T-cell (primary cell): ENCODE measurements at regions of chr5 and their contacts with region 1.

Region 1: GRCh38 chr5:141960449-141961202 is 2.6 kb upstream of the PCDH12 start:
- DNase-seq: peak; percentile 79 to 96 (median 88)
- ATAC-seq: peak; percentile 95 to 97 (median 96)
- H3K4me3 ChIP-seq: no peak overlapping the region
- H3K4me3 Mint-ChIP-seq: peak overlapping the region; percentile 25 to 39 (median 26)
- H3K27ac ChIP-seq: peak overlapping the region; percentile 45
- H3K27ac Mint-ChIP-seq: peak overlapping the region; percentile 94
- H3K4me1 ChIP-seq: peaks cover 13 to 47% of the 10 kb centered on the region in 2 experiments
- H3K4me1 Mint-ChIP-seq: peaks cover 41 to 51% (median 50%) of the 10 kb centered on the region in 3 donors
- H3K27me3 ChIP-seq: no peaks in the 10 kb centered on the region
- H3K27me3 Mint-ChIP-seq: no peaks in the 10 kb centered on the region

Region 2: DNA sequence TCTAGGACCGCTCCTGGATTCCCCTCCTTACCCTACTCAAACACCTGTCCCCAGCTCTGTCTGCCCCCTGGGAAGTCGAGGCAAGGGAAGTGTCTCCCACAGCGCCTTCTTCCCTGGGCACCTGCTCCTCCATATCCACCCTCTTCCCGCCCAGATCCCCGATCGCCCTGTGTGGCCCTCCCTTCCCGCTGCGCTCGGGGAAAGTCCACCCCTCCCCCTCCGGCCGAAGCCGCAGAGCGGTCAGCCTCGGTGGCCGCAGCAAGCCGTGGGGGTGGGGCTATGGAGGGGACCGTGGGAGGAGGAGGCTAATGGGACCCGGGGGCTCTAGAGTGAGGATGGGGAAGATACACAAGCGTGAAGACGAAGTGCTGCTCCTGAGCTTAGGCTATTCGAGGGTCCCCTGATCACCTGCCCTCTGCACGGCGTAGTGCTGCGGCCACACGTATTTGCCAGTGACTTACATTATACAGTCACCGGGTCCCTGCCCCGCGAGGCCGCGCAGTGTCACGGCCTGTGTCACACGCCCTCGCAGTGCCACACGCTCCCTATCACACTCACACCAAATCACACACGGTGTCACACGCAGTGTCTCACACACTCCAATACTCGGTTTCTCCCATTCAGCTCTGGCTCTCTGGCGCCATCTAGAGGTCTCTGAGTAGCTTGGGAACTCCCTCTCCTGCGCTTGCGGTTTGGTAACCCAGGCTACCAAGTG is 81.8 kb before region 1 on chr5:
- CTCF ChIA-PET with region 1: interaction called, 3 to 18 read pairs
- POLR2A ChIA-PET with region 1: no interaction called
- DNase-seq: peak; percentile 75 to 98 (median 84)
- ATAC-seq: peak; percentile 81 to 88 (median 83)
- H3K4me3 ChIP-seq: peak overlapping the region; percentile 46 to 61
- H3K4me3 Mint-ChIP-seq: peak overlapping the region; percentile 64 to 81 (median 80)
- H3K27ac ChIP-seq: no peak overlapping the region
- H3K27ac Mint-ChIP-seq: no peak overlapping the region
- H3K4me1 ChIP-seq: peaks cover 10 to 53% of the 10 kb centered on the region in 2 experiments
- H3K4me1 Mint-ChIP-seq: peaks cover 30 to 34% (median 33%) of the 10 kb centered on the region in 3 donors
- H3K27me3 ChIP-seq: peaks cover 20 to 94% of the 10 kb centered on the region in 2 experiments
- H3K27me3 Mint-ChIP-seq: peaks cover 70 to 80% of the 10 kb centered on the region in 2 donors

Region 3: GRCh38 chr5:141889282-141889871 is 71.2 kb before region 1 on chr5:
- CTCF ChIA-PET with region 1: interaction called, 3 to 10 read pairs
- POLR2A ChIA-PET with region 1: no interaction called
- DNase-seq: peak in 1 of 35 experiments; percentile 16
- ATAC-seq: no peak
- H3K4me3 ChIP-seq: no peak overlapping the region
- H3K4me3 Mint-ChIP-seq: no peak overlapping the region
- H3K27ac ChIP-seq: no peak overlapping the region
- H3K27ac Mint-ChIP-seq: no peak overlapping the region
- H3K4me1 ChIP-seq: no peaks in the 10 kb centered on the region
- H3K4me1 Mint-ChIP-seq: no peaks in the 10 kb centered on the region
- H3K27me3 ChIP-seq: peaks cover 4 to 21% of the 10 kb centered on the region in 2 experiments
- H3K27me3 Mint-ChIP-seq: peaks cover 32 to 38% of the 10 kb centered on the region in 2 donors

Region 4: GRCh38 chr5:141931694-141932093 is 28.9 kb before region 1 on chr5:
- CTCF ChIA-PET with region 1: no interaction called
- POLR2A ChIA-PET with region 1: no interaction called
- DNase-seq: no peak
- ATAC-seq: no peak
- H3K4me3 ChIP-seq: no peak overlapping the region
- H3K4me3 Mint-ChIP-seq: no peak overlapping the region
- H3K27ac ChIP-seq: no peak overlapping the region
- H3K27ac Mint-ChIP-seq: no peak overlapping the region
- H3K4me1 ChIP-seq: no peaks in the 10 kb centered on the region
- H3K4me1 Mint-ChIP-seq: peaks cover 12 to 14% (median 13%) of the 10 kb centered on the region in 3 donors
- H3K27me3 ChIP-seq: no peaks in the 10 kb centered on the region
- H3K27me3 Mint-ChIP-seq: no peaks in the 10 kb centered on the region

Region 5: DNA sequence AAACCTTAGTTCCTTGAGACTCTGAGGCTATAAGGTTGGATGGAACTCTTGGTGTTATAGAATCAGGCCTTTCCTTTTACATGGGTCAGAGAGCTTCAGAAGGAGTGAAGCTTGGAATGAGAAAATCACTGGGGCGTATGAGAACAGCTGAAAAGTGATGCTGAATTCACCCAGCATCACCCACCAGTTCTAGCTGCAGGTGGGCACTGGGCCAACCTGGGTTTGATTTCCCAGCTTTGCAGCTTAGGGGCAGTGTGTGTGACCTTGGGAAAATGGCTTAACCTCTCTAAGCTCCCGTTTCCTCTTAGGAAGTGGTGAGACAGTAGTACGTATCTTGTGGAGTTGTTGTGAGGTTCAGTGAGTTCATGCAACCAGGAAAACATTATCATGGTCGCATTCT is 13.3 kb before region 1 on chr5:
- CTCF ChIA-PET with region 1: interaction called, 4 to 10 read pairs
- POLR2A ChIA-PET with region 1: no interaction called
- DNase-seq: no peak
- ATAC-seq: no peak
- H3K4me3 ChIP-seq: no peak overlapping the region
- H3K4me3 Mint-ChIP-seq: no peak overlapping the region
- H3K27ac ChIP-seq: no peak overlapping the region
- H3K27ac Mint-ChIP-seq: no peak overlapping the region
- H3K4me1 ChIP-seq: peaks cover 2 to 13% of the 10 kb centered on the region in 2 experiments
- H3K4me1 Mint-ChIP-seq: peaks cover 9 to 15% (median 12%) of the 10 kb centered on the region in 3 donors
- H3K27me3 ChIP-seq: no peaks in the 10 kb centered on the region
- H3K27me3 Mint-ChIP-seq: no peaks in the 10 kb centered on the region